Activated naive CD4-positive, alpha-beta T cell treated with anti-CD3 and anti-CD28 coated beads for 36 hours (primary cell): ENCODE measurements at regions of chr18 and their contacts with region 1.

Region 1: DNA sequence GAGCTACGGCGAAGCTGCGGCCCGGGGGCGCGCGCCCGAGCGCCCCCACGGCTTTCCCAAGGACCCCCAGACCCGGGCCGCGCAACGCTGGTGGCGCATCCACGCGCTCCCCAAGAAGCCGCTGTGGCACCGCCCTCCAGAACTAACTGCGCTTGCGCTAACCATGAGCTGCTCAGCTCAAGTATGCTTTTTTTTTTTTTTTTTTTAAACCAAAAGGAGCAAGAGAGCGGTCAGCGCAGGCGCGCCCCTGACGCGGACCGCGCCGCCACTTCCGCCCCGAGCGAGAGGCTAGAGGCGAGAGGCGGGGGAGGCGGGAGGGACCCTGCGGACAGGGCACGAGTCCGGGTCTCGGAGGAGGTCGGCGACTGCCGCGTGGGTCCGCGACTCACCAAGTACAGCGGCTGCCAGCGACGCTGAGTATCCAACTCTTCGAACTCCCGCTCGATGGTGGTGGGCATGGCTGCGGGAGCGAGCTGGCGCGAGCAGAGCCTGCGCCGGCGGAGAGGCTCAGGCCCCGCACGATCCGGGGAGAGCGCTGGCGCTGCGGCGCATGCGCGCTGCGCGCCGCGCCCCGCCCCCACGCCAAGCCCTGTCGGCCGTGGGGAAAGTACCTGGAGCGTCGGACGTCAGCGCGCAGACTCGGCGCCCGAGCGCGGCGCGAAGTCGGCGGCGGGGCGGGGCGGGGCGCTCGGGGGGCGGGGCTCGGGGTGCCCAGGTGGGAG is at the start of gene PTPN2:
- DNase-seq: peak; percentile 92
- H3K4me3 Mint-ChIP-seq: peak within 1 kb of the TSS; percentile 89
- H3K27ac Mint-ChIP-seq: peak within 1 kb of the TSS; percentile 90
- H3K4me1 Mint-ChIP-seq: peaks cover 53% of the 10 kb centered on the region
- H3K27me3 Mint-ChIP-seq: no peaks in the 10 kb centered on the region
- total RNA-seq, gene PTPN2: 68.5 to 71.8 TPM

Region 2: GRCh38 chr18:12295901-12296386 is 587.9 kb before region 1 on chr18:
- CTCF ChIA-PET with region 1: no interaction called
- intact Hi-C with region 1: no loop called
- DNase-seq: no peak
- H3K4me3 Mint-ChIP-seq: no peak overlapping the region
- H3K27ac Mint-ChIP-seq: no peak overlapping the region
- H3K4me1 Mint-ChIP-seq: no peaks in the 10 kb centered on the region
- H3K27me3 Mint-ChIP-seq: peaks cover 5% of the 10 kb centered on the region

Region 3: DNA sequence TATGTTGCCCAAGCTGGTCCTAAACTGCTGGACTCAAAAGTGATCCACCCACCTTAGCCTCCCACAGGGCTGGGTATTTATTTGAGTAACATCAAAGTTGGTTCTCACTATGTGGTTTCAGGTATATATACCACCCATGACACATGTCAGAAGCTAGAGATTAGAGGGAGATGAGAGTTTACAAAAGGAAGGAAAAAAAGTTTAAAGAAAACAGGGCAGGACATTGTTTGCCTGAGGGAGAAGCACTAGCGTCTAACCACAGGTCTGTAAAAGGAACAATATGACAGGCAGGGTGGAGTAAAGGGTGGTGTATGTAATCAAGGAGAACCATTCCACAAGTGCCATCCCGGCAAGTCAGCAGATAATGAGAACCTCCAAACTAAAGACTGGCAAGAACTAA is 189.8 kb before region 1 on chr18:
- CTCF ChIA-PET with region 1: no interaction called
- intact Hi-C with region 1: no loop called
- DNase-seq: no peak
- H3K4me3 Mint-ChIP-seq: no peak overlapping the region
- H3K27ac Mint-ChIP-seq: no peak overlapping the region
- H3K4me1 Mint-ChIP-seq: peaks cover 10% of the 10 kb centered on the region
- H3K27me3 Mint-ChIP-seq: no peaks in the 10 kb centered on the region

Region 4: GRCh38 chr18:12862467-12862866 is 21.4 kb before region 1 on chr18:
- CTCF ChIA-PET with region 1: interaction called, 5 read pairs
- intact Hi-C with region 1: loop called (anchors 2 kb)
- DNase-seq: no peak
- H3K4me3 Mint-ChIP-seq: no peak overlapping the region
- H3K27ac Mint-ChIP-seq: no peak overlapping the region
- H3K4me1 Mint-ChIP-seq: peaks cover 48% of the 10 kb centered on the region
- H3K27me3 Mint-ChIP-seq: no peaks in the 10 kb centered on the region

Region 5: GRCh38 chr18:12904012-12904516 is 20.2 kb after region 1 on chr18:
- CTCF ChIA-PET with region 1: interaction called, 12 read pairs
- intact Hi-C with region 1: no loop called
- DNase-seq: peak; percentile 68
- H3K4me3 Mint-ChIP-seq: no peak overlapping the region
- H3K27ac Mint-ChIP-seq: peak overlapping the region; percentile 26
- H3K4me1 Mint-ChIP-seq: peaks cover 4% of the 10 kb centered on the region
- H3K27me3 Mint-ChIP-seq: no peaks in the 10 kb centered on the region